ENCODE measurements at regions of chr12 and their contacts with region 1.

Region 1: GRCh38 chr12:102484428-102484958 is 4.1 kb upstream of the IGF1 start:
- DNase-seq: peak; percentile 56 to 65 (median 62)
- ATAC-seq: peak; percentile 68
- H3K4me3 ChIP-seq: no peak overlapping the region
- H3K27ac ChIP-seq: peak overlapping the region in 1 of 4 donors; percentile 39
- H3K4me1 ChIP-seq: peaks cover 17% of the 10 kb centered on the region
- H3K27me3 ChIP-seq: no peaks in the 10 kb centered on the region
- CTCF ChIP-seq: peak; percentile 59 to 97 (median 73)
- POLR2A ChIP-seq: no peak

Region 2: GRCh38 chr12:102300824-102301461 is 183.6 kb before region 1 on chr12:
- intact Hi-C with region 1: loop called (anchors 10 kb)
- DNase-seq: peak; percentile 29 to 49 (median 43)
- ATAC-seq: peak; percentile 76
- H3K4me3 ChIP-seq: no peak overlapping the region
- H3K27ac ChIP-seq: no peak overlapping the region
- H3K4me1 ChIP-seq: no peaks in the 10 kb centered on the region
- H3K27me3 ChIP-seq: no peaks in the 10 kb centered on the region
- CTCF ChIP-seq: peak in 5 of 7 experiments; percentile 26 to 81 (median 76)
- POLR2A ChIP-seq: no peak

Region 3: DNA sequence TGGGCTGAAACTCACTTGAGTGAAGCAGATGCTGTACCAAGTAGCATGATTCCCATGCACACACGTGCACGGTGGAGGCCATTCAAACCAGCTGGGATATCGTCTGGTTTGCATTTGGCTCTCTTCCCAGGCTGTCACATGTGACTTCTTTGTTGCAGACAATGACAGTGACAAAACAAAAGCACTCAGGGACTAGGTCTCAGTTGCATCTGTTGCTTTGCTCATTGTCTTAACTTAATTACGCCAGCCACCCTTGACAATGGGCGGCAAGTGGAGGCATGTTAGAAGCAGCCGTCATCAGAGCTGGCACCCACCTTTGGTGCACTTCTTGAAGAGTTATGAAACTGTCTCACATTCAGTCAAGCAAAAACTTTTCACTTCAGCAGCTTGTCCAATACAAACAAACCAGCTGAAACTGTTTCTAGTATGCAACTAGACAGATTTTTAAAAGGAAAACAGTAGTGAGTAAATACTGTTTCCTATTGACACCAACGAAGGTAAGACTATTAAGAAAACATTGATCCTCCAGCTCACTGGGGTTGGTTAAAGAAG is 78.4 kb before region 1 on chr12:
- intact Hi-C with region 1: no loop called
- DNase-seq: peak; percentile 52 to 72 (median 66)
- ATAC-seq: peak; percentile 84
- H3K4me3 ChIP-seq: no peak overlapping the region
- H3K27ac ChIP-seq: peak overlapping the region in 3 of 4 donors; percentile 25 to 55 (median 32)
- H3K4me1 ChIP-seq: peaks cover 12% of the 10 kb centered on the region
- H3K27me3 ChIP-seq: no peaks in the 10 kb centered on the region
- CTCF ChIP-seq: no peak
- POLR2A ChIP-seq: no peak

Region 4: GRCh38 chr12:102781117-102781516 is 296.6 kb after region 1 on chr12:
- intact Hi-C with region 1: no loop called
- DNase-seq: peak in 1 of 4 donors; percentile 28
- ATAC-seq: no peak
- H3K4me3 ChIP-seq: no peak overlapping the region
- H3K27ac ChIP-seq: no peak overlapping the region
- H3K4me1 ChIP-seq: no peaks in the 10 kb centered on the region
- H3K27me3 ChIP-seq: no peaks in the 10 kb centered on the region
- CTCF ChIP-seq: no peak
- POLR2A ChIP-seq: no peak

Measured in body of pancreas (tissue), 4 donors.